CD14-positive monocyte (primary cell): ENCODE measurements at regions of chr11 and their contacts with region 1.

Region 1: GRCh38 chr11:48020092-48020755 is 39.9 kb downstream of the PTPRJ start:
- DNase-seq: peak; percentile 95 to 98 (median 95)
- H3K4me3 ChIP-seq: peak overlapping the region in 1 of 3 experiments; percentile 54
- H3K4me3 Mint-ChIP-seq: peak overlapping the region; percentile 56 to 83
- H3K27ac ChIP-seq: peak overlapping the region; percentile 84 to 89
- H3K27ac Mint-ChIP-seq: peak overlapping the region; percentile 92 to 99 (median 97)
- H3K4me1 ChIP-seq: peaks cover 86 to 92% of the 10 kb centered on the region in 2 donors
- H3K4me1 Mint-ChIP-seq: peaks cover 93% of the 10 kb centered on the region
- H3K27me3 ChIP-seq: no peaks in the 10 kb centered on the region
- H3K27me3 Mint-ChIP-seq: peaks cover 0 to 2% (median 0%) of the 10 kb centered on the region in 3 donors
- CTCF ChIP-seq: peak; percentile 50

Region 2: GRCh38 chr11:47786373-47786772 is 233.9 kb before region 1 on chr11:
- intact Hi-C with region 1: no loop called
- DNase-seq: no peak
- H3K4me3 ChIP-seq: no peak overlapping the region
- H3K4me3 Mint-ChIP-seq: no peak overlapping the region
- H3K27ac ChIP-seq: no peak overlapping the region
- H3K27ac Mint-ChIP-seq: no peak overlapping the region
- H3K4me1 ChIP-seq: no peaks in the 10 kb centered on the region
- H3K4me1 Mint-ChIP-seq: no peaks in the 10 kb centered on the region
- H3K27me3 ChIP-seq: no peaks in the 10 kb centered on the region
- H3K27me3 Mint-ChIP-seq: peaks cover 0 to 2% (median 0%) of the 10 kb centered on the region in 3 donors
- CTCF ChIP-seq: no peak

Region 3: DNA sequence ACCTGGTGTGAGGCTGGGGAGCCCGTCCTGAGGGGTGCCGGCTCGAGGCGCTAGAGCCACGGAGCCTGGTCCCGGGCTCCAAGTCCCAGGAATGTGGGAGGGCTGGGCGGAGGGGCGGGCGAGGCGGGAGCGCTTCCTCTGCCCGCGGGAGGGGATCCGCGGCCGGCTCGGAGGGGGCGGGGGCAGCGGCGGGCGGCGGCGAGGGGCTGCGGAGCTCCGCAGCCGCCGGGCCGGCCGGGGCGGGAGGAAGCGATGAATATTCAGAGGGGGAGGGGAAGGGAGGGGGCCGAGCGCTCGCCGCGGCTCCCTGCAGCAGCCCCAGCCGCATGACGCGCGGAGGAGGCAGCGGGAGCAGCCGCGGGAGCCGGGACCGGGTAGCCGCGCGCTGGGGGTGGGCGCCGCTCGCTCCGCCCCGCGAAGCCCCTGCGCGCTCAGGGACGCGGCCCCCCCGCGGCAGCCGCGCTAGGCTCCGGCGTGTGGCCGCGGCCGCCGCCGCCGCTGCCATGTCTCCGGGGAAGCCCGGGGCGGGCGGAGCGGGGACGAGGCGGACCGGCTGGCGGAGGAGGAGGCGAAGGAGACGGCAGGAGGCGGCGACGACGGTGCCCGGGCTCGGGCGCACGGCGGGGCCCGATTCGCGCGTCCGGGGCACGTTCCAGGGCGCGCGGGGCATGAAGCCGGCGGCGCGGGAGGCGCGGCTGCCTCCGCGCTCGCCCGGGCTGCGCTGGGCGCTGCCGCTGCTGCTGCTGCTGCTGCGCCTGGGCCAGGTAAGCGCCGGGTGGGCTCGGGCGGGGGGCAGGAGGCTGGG is 39.8 kb before region 1 on chr11 and contains the start of gene PTPRJ:
- intact Hi-C with region 1: loop called (anchors 5 kb)
- DNase-seq: peak in 2 of 3 donors; percentile 46 to 67
- H3K4me3 ChIP-seq: peak within 1 kb of the TSS; percentile 69 to 96 (median 80)
- H3K4me3 Mint-ChIP-seq: peak within 1 kb of the TSS; percentile 94 to 98
- H3K27ac ChIP-seq: peak within 1 kb of the TSS; percentile 71 to 76
- H3K27ac Mint-ChIP-seq: peak within 1 kb of the TSS in 6 of 7 donors; percentile 6 to 96 (median 79)
- H3K4me1 ChIP-seq: peaks cover 48 to 59% of the 10 kb centered on the region in 2 donors
- H3K4me1 Mint-ChIP-seq: peaks cover 55% of the 10 kb centered on the region
- H3K27me3 ChIP-seq: peaks cover 0 to 7% of the 10 kb centered on the region in 2 donors
- H3K27me3 Mint-ChIP-seq: peaks cover 0 to 11% (median 7%) of the 10 kb centered on the region in 3 donors
- CTCF ChIP-seq: no peak
- polyA plus RNA-seq, gene PTPRJ: 10.0 to 36.4 (median 14.6) TPM

Region 4: GRCh38 chr11:48052183-48053045 is 32.2 kb after region 1 on chr11:
- intact Hi-C with region 1: loop called in 1 of 2 experiments (anchors 5 kb)
- DNase-seq: no peak
- H3K4me3 ChIP-seq: no peak overlapping the region
- H3K4me3 Mint-ChIP-seq: no peak overlapping the region
- H3K27ac ChIP-seq: no peak overlapping the region
- H3K27ac Mint-ChIP-seq: peak overlapping the region in 6 of 7 donors; percentile 23 to 81 (median 68)
- H3K4me1 ChIP-seq: peaks cover 65 to 87% of the 10 kb centered on the region in 2 donors
- H3K4me1 Mint-ChIP-seq: peaks cover 88% of the 10 kb centered on the region
- H3K27me3 ChIP-seq: no peaks in the 10 kb centered on the region
- H3K27me3 Mint-ChIP-seq: no peaks in the 10 kb centered on the region
- CTCF ChIP-seq: no peak